Breast epithelium (tissue), 4 donors: ENCODE measurements at regions of chr16 and their contacts with region 1.

Region 1: DNA sequence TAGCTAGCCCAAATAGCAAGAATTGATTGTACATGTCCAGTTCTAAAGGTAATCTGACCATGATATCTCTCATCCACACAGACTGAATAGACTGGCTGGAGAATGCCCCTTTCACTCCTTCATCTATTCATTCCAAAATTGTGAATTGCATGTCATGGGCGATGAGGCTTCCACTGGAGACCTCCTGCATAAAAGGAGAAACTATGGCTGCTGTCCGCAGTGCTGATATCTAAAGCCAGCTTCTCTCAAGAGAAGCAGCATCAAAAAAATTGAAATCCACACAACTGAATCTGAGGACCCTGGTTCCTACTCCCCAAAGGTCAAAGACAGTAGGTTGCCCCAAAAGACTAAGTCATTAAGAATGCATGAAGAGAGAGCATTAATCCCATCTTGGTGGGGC is 7.9 kb upstream of the SCNN1G start:
- DNase-seq: no peak
- H3K4me3 ChIP-seq: no peak overlapping the region
- H3K27ac ChIP-seq: no peak overlapping the region
- H3K4me1 ChIP-seq: no peaks in the 10 kb centered on the region
- H3K27me3 ChIP-seq: no peaks in the 10 kb centered on the region
- CTCF ChIP-seq: no peak
- POLR2A ChIP-seq: no peak

Region 2: GRCh38 chr16:23448392-23448791 is 273.8 kb after region 1 on chr16:
- intact Hi-C with region 1: loop called (anchors 2 kb)
- DNase-seq: no peak
- H3K4me3 ChIP-seq: no peak overlapping the region
- H3K27ac ChIP-seq: no peak overlapping the region
- H3K4me1 ChIP-seq: peaks cover 0 to 2% of the 10 kb centered on the region in 2 donors
- H3K27me3 ChIP-seq: no peaks in the 10 kb centered on the region
- CTCF ChIP-seq: no peak
- POLR2A ChIP-seq: no peak